ENCODE measurements at regions of chr1 and their contacts with region 1.

Region 1: DNA sequence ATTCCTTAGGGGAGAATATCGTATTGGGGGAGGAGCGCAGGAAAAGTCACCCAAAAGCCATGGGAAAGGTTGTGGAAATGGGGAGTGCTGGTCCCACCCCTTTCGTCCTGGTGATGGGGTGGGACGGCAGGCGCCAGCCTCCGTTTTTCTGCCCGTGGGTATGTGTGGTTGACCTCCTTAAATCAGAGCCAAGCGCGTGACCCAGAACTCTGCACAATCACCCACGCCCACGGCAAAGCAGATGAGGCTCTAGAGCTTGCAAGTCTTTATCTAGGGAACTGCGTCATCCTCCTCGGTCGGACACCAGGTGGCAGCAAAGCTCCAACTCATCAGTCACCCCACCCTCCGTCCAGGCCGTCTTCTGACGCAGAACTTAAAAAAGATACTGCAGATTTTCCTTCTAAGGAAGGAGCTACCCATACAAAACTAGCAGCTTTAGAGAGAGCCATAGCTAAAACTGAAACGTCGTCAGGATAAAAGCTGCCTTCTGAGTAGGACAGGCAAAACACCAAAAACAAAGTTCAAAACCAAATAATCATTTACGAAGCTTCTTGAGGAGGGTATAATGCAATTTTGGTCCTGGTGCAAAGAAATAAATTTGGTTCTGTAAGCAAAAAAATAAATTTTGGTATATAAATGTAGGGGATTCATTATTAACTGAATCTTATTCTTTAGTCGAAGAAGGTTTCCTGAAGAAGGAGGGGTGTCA is 62.0 kb downstream of the TBX19 start:
- DNase-seq: peak; percentile 92
- H3K4me3 Mint-ChIP-seq: no peak overlapping the region
- H3K27ac Mint-ChIP-seq: no peak overlapping the region
- H3K4me1 Mint-ChIP-seq: peaks cover 19% of the 10 kb centered on the region
- H3K27me3 Mint-ChIP-seq: no peaks in the 10 kb centered on the region

Region 2: DNA sequence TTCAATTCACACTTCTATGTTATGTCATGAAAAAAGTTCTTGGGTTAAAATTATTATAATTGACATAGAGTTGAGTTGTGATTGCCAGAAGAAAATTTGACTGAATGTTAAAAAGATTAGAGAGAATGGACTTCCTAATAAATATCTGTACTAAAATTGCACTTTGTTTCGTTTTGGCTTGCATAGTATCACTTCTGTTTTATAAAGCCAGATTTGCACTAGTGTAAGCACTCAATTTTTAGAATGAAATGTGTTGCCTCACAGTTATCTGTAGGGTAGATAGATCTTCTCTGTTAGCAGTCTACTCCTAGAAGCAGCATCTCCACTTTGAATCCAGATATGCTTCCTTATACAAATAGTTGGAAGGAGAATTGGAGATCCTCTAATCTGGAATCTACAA is 310.7 kb before region 1 on chr1:
- CTCF ChIA-PET with region 1: no interaction called
- intact Hi-C with region 1: no loop called
- DNase-seq: no peak
- H3K4me3 Mint-ChIP-seq: no peak overlapping the region
- H3K27ac Mint-ChIP-seq: no peak overlapping the region
- H3K4me1 Mint-ChIP-seq: no peaks in the 10 kb centered on the region
- H3K27me3 Mint-ChIP-seq: no peaks in the 10 kb centered on the region

Region 3: DNA sequence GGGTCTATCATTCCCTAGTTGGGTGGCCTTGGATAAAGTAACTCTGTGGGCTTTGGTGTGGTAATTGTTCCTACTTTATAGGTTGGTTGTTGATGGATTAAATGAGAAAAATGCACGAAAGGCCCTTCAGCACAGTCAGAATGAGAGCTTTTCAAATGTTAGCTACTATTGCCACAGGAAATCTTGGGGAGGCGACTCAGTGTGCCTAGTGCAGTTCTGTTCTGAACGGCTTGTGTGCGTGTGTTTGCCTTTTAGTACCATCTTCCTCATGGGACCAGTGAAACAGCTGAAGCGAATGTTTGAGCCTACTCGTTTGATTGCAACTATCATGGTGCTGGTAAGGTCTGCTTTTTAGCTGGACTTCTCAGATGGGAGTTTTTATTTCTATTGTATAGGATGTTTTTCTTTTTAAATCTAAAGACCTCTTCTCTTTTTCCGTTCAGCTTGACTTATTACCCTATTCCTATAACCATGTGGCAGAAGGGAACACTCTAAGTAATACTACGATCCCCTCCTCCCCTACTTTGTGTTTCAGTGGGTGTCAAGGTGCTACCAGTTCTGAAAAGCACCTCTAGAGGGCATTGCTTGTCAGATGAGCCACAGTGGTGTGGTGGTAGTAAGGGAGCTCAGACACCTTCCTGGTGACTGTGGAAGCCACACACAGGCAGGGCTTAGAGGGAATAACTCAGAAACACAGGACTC is 107.7 kb before region 1 on chr1:
- CTCF ChIA-PET with region 1: interaction called, 23 read pairs
- intact Hi-C with region 1: loop called (anchors 5 kb)
- DNase-seq: peak; percentile 53
- H3K4me3 Mint-ChIP-seq: no peak overlapping the region
- H3K27ac Mint-ChIP-seq: peak overlapping the region; percentile 48
- H3K4me1 Mint-ChIP-seq: peaks cover 41% of the 10 kb centered on the region
- H3K27me3 Mint-ChIP-seq: no peaks in the 10 kb centered on the region

Region 4: GRCh38 chr1:168273575-168273974 is 69.2 kb before region 1 on chr1:
- CTCF ChIA-PET with region 1: no interaction called
- intact Hi-C with region 1: no loop called
- DNase-seq: no peak
- H3K4me3 Mint-ChIP-seq: no peak overlapping the region
- H3K27ac Mint-ChIP-seq: no peak overlapping the region
- H3K4me1 Mint-ChIP-seq: no peaks in the 10 kb centered on the region
- H3K27me3 Mint-ChIP-seq: no peaks in the 10 kb centered on the region

Region 5: GRCh38 chr1:168386949-168387586 is 44.3 kb after region 1 on chr1:
- CTCF ChIA-PET with region 1: interaction called, 24 read pairs
- intact Hi-C with region 1: no loop called
- DNase-seq: peak; percentile 78
- H3K4me3 Mint-ChIP-seq: peak overlapping the region; percentile 38
- H3K27ac Mint-ChIP-seq: no peak overlapping the region
- H3K4me1 Mint-ChIP-seq: peaks cover 12% of the 10 kb centered on the region
- H3K27me3 Mint-ChIP-seq: peaks cover 9% of the 10 kb centered on the region

Region 6: DNA sequence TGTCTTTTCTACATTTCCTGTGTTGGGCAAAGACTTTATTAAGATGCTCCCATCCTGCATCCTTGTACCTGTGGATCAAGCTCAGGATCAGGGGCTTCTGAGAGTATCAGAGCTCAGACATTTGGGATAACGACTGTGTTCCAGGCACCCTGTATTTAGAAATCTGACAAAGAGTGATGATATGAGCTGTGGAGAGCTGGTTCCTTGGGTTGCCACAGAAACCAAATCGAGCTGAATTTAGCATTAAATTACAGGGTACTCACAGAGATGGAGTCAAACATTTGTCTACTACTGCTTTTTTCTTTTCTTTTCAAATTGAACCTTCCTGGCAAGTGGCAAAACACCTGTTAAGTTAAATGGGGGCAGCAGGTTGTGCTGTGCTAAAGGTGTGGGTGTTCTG is 90.5 kb after region 1 on chr1:
- CTCF ChIA-PET with region 1: interaction called, 72 read pairs
- intact Hi-C with region 1: no loop called
- DNase-seq: no peak
- H3K4me3 Mint-ChIP-seq: no peak overlapping the region
- H3K27ac Mint-ChIP-seq: no peak overlapping the region
- H3K4me1 Mint-ChIP-seq: no peaks in the 10 kb centered on the region
- H3K27me3 Mint-ChIP-seq: peaks cover 4% of the 10 kb centered on the region

Region 7: DNA sequence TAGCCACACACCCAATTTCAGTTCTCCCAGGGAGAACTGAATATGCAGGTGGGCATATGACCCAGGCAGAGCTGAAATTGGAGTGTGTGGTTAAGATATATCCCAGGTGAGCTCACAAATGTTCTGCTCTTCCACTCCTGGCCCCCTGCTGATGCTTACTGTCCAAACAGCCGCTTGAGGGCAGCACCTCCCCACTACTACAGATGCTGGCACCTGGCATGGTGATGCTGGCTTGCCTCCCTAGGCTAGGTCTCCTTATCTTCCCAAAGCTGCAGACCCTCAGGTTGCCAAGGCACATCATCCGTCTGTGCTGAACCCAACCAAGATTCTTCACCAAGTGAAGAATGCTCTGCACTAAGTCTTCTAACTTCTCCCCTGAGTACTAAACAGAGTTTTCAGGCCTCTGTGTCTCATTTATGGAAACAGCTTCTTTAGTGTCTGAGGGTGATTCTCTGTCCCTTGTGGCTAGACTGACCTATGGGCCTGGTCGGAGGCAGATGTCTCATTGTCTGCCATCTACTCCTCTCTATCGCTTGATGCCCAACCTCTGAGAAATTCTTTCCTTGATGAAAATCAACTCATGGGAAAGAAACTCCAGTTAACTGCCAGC is 260.9 kb after region 1 on chr1:
- CTCF ChIA-PET with region 1: interaction called, 14 read pairs
- intact Hi-C with region 1: loop called (anchors 10 kb)
- DNase-seq: peak; percentile 84
- H3K4me3 Mint-ChIP-seq: no peak overlapping the region
- H3K27ac Mint-ChIP-seq: no peak overlapping the region
- H3K4me1 Mint-ChIP-seq: no peaks in the 10 kb centered on the region
- H3K27me3 Mint-ChIP-seq: peaks cover 3% of the 10 kb centered on the region

Region 8: GRCh38 chr1:168767894-168768584 is 425.3 kb after region 1 on chr1:
- CTCF ChIA-PET with region 1: no interaction called
- intact Hi-C with region 1: no loop called
- DNase-seq: no peak
- H3K4me3 Mint-ChIP-seq: no peak overlapping the region
- H3K27ac Mint-ChIP-seq: no peak overlapping the region
- H3K4me1 Mint-ChIP-seq: no peaks in the 10 kb centered on the region
- H3K27me3 Mint-ChIP-seq: peaks cover 1% of the 10 kb centered on the region

Region 9: DNA sequence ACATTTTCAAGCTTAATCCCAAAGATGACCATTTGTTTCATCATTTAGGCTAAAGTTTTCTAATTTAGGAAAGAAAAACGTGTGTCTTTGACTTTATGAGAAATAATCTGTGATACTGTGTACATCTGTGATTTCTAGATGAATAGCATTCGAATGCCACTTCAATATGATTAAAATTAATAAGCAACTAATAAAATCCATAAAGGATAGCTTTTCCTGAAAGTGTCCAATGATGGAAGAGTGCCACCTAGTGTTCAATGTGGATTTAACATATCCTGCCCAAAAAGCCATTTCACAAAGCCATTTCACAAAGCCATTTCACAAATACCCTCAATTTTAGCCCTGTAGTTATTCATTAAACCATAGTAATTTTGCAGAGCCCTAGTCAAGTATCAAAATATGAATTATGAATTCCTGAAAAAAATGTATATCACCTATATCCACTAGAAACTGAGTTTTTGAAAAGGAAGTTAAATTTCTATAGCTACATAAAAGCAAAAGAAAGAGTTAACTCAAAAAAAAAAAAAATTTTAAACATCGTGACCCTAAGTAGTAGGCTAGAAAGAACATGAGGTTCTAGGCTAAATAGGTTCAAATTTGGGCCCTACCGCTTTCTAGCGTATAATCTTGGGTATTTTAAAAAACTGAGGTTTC is 1005.8 kb after region 1 on chr1:
- CTCF ChIA-PET with region 1: interaction called, 3 read pairs
- intact Hi-C with region 1: loop called (anchors 1 kb)
- DNase-seq: peak; percentile 31
- H3K4me3 Mint-ChIP-seq: no peak overlapping the region
- H3K27ac Mint-ChIP-seq: no peak overlapping the region
- H3K4me1 Mint-ChIP-seq: peaks cover 9% of the 10 kb centered on the region
- H3K27me3 Mint-ChIP-seq: no peaks in the 10 kb centered on the region

Measured in activated naive CD4-positive, alpha-beta T cell treated with anti-CD3 and anti-CD28 coated beads for 36 hours (primary cell).